ENCODE measurements at regions of chr18 and their contacts with region 1.

Region 1: GRCh38 chr18:10560450-10561045 is 34.7 kb downstream of the NAPG start:
- DNase-seq: peak; percentile 73
- H3K4me3 ChIP-seq: peak overlapping the region; percentile 28
- H3K27ac ChIP-seq: no peak overlapping the region
- H3K4me1 ChIP-seq: peaks cover 5% of the 10 kb centered on the region; the same call in 1 of the 2 replicates
- H3K27me3 ChIP-seq: no peaks in the 10 kb centered on the region

Region 2: DNA sequence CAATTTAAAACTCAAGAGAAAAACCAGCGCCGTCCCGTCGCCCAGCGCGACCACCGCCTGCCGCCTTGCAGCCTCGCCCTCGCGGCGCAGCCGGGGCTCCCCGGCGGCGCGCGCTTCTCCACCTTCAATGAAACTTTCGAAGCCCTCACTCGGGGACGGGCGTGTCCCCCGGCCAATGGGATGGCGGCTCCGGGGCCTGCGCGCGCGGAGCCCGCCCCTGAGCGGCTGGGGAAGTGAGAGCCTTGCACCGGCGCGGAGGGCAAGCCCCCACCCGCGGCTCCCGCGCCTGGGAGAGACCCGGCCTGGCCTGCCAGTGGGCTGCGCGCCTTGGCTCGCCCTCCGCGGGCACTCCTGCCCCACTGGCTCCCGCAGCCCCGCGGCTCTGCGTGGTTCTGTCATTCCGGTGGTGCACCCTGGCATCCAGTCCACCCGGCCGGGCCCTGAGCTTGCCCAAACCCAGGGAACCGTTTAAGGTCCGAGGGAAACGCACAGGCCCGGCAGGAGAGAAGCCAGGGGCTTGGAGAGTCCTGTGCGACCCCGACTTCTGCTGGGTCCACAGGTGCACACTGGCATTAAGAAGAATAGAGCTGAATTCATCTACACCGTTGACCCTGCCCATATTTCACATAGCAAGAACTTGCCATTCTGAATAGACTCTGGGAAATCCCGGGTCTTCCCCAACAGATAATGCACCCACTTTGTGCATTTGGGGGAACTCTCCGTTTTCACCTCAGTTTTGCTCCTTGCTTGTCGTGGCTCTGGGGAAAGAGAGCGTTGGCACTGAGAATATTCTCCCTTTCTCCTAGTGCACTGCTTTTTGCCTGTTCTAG is 589.1 kb after region 1 on chr18 and contains the start of gene PIEZO2:
- in situ Hi-C with region 1: loop called (anchors 25 kb)
- DNase-seq: peak; percentile 57
- H3K4me3 ChIP-seq: peak within 1 kb of the TSS; percentile 67
- H3K27ac ChIP-seq: no peak within 1 kb of the TSS
- H3K4me1 ChIP-seq: no peaks in the 10 kb centered on the region
- H3K27me3 ChIP-seq: peaks cover 51% of the 10 kb centered on the region
- total RNA-seq, gene PIEZO2: 1.1 and 1.5 TPM in 2 replicates

Region 3: GRCh38 chr18:11553098-11553940 is 992.8 kb after region 1 on chr18:
- in situ Hi-C with region 1: loop called (anchors 10 kb)
- DNase-seq: peak; percentile 67
- H3K4me3 ChIP-seq: no peak overlapping the region
- H3K27ac ChIP-seq: no peak overlapping the region
- H3K4me1 ChIP-seq: no peaks in the 10 kb centered on the region
- H3K27me3 ChIP-seq: peaks cover 22% of the 10 kb centered on the region

Measured in GM23248 (cell line).